ENCODE measurements at regions of chr21 and their contacts with region 1.

Region 1: GRCh38 chr21:28745131-28746016 is 247.3 kb downstream of the LTN1 start:
- DNase-seq: peak; percentile 81 to 84
- ATAC-seq: peak; percentile 95
- H3K4me3 ChIP-seq: peak overlapping the region; percentile 22 to 40
- H3K27ac ChIP-seq: peak overlapping the region in 1 of 2 donors; percentile 47
- H3K4me1 ChIP-seq: no peaks in the 10 kb centered on the region
- H3K27me3 ChIP-seq: no peaks in the 10 kb centered on the region

Region 2: DNA sequence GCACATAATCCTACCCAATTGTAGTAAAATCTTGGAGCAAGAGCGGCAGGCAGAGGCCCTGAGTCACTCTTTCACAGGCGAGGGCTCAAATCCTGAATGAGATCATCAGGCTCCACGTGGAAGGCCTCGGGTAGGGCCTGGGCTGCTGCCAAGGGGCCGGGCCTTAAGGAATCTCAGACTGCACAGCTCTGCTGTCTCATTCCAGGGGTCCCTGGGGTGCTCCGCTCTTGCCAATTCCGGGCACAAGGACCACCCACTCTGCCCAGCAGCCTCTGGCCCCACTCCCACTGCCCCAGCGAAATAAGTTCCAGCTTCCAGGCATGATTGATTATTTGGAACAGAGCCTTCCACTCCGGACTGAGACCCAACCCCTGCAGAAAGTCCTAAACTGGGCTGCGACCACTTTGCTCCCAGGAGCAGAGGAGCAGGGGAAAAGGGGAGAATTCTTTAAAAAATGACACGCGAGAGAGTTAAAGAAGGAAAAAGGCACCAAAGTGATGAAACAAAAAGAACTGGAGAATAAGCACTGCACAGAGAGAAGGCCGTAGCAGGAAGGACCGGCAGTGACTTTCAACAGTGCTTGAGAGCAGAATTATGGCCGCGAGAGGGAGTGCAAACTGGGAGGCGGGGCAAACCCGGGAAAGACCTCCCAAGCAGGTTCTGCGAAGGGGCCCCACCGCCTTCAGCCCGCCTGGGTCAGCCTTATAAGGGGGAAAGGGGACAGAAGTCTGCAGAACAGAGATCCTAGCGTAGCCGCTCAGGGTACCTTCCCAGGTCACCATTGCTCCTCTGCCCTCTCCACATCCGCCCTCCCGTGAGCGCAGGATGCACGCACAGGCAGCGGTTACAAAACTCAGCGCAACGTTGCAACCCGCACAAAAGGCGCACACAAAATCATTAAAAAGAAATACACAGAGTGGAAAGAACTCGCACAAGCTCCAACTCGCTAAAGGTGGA is 1902.1 kb before region 1 on chr21:
- intact Hi-C with region 1: loop called (anchors 2 to 5 kb)
- DNase-seq: peak; percentile 95 to 97
- ATAC-seq: peak; percentile 75
- H3K4me3 ChIP-seq: peak overlapping the region; percentile 88 to 93
- H3K27ac ChIP-seq: peak overlapping the region in 1 of 2 donors; percentile 87
- H3K4me1 ChIP-seq: no peaks in the 10 kb centered on the region
- H3K27me3 ChIP-seq: no peaks in the 10 kb centered on the region

Region 3: GRCh38 chr21:27700974-27701614 is 1044.3 kb before region 1 on chr21:
- intact Hi-C with region 1: loop called (anchors 2 to 5 kb)
- DNase-seq: peak; percentile 86 to 94
- ATAC-seq: peak; percentile 91
- H3K4me3 ChIP-seq: no peak overlapping the region
- H3K27ac ChIP-seq: no peak overlapping the region
- H3K4me1 ChIP-seq: no peaks in the 10 kb centered on the region
- H3K27me3 ChIP-seq: no peaks in the 10 kb centered on the region

Region 4: GRCh38 chr21:28336314-28336713 is 409.1 kb before region 1 on chr21:
- intact Hi-C with region 1: loop called in 1 of 2 experiments (anchors 5 kb)
- DNase-seq: no peak
- ATAC-seq: no peak
- H3K4me3 ChIP-seq: no peak overlapping the region
- H3K27ac ChIP-seq: no peak overlapping the region
- H3K4me1 ChIP-seq: no peaks in the 10 kb centered on the region
- H3K27me3 ChIP-seq: no peaks in the 10 kb centered on the region

Region 5: GRCh38 chr21:28636988-28637691 is 108.2 kb before region 1 on chr21:
- intact Hi-C with region 1: loop called in 1 of 2 experiments (anchors 5 kb)
- DNase-seq: no peak
- ATAC-seq: no peak
- H3K4me3 ChIP-seq: peak overlapping the region in 1 of 2 donors; percentile 48
- H3K27ac ChIP-seq: peak overlapping the region; percentile 91 to 100
- H3K4me1 ChIP-seq: peaks cover 10 to 13% of the 10 kb centered on the region in 2 donors
- H3K27me3 ChIP-seq: no peaks in the 10 kb centered on the region

Region 6: DNA sequence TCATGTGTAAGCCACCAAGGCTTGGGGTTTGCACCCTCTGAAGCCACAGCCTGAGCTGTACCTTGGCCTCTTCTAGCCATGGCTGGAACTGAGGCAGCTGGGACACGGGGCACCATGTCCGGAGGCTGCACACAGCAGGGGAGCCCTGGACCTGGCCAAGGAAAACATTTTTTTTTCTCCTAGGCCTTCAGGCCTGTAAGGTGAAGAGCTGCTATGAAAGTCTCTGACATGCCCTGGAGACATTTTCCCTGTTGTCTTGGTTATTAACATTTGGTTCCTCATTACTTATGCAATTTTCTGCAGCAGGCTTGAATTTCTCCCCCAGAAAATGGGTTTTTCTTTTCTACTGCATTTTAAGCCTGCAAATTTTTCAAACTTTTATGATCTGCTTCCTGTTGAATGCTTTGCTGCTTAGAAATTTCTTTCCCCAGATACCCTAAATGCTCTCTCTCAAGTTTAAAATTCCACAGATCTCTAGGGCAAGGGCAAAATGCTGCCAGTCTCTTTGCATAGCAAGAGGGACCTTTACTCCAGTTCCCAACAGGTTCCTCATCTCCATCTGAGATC is 48.4 kb before region 1 on chr21:
- intact Hi-C with region 1: no loop called
- DNase-seq: no peak
- ATAC-seq: no peak
- H3K4me3 ChIP-seq: no peak overlapping the region
- H3K27ac ChIP-seq: no peak overlapping the region
- H3K4me1 ChIP-seq: no peaks in the 10 kb centered on the region
- H3K27me3 ChIP-seq: no peaks in the 10 kb centered on the region

Region 7: DNA sequence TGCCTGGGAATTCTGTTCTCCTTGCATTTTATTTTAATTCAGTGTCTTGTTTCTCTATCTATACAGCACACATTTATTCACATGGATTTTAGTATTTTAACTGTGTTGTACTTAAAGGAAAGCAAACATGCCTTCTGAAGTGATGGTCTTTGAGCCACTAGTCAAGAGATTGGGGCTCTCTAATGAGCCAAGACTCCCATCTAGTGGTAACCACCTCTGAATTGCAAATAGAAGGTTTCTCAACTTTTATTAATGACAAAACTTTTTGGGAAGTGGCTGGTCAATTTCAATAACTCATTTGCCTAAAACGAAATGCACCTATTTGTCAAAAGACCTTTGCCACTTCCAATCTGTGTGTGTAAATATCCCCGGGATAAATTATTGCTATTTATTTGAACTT is 47.7 kb after region 1 on chr21:
- intact Hi-C with region 1: loop called in 1 of 2 experiments (anchors 1 kb)
- DNase-seq: no peak
- ATAC-seq: no peak
- H3K4me3 ChIP-seq: no peak overlapping the region
- H3K27ac ChIP-seq: no peak overlapping the region
- H3K4me1 ChIP-seq: peaks cover 2% of the 10 kb centered on the region in 2 donors
- H3K27me3 ChIP-seq: no peaks in the 10 kb centered on the region